Lower leg skin (tissue), 4 donors: ENCODE measurements at regions of chr17 and their contacts with region 1.

Region 1: DNA sequence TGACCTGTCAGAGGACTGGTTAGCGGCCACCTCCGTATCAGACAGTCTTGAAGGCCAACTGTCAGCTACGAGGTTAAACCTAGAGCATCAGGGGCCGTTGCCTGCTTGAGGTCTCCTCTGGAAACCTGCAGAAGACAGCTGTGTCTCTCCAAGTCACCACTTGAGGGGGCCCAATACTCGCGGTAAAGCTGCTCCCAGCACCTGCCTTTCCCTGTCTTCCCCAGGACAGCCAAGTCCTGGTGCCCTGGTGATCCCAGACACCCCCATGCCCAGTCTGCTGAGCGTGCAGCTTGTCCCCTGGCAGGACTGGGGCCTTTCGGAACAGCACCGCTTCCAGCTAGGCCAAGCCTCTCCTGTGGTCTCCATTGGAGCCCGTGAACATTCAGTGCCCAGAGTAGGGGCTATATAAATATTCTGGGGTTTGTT is 80.1 kb downstream of the DNAH17 start:
- DNase-seq: peak; percentile 59 to 91
- H3K4me3 ChIP-seq: no peak overlapping the region
- CTCF ChIP-seq: peak in 1 of 3 donors; percentile 42
- POLR2A ChIP-seq: no peak

Region 2: DNA sequence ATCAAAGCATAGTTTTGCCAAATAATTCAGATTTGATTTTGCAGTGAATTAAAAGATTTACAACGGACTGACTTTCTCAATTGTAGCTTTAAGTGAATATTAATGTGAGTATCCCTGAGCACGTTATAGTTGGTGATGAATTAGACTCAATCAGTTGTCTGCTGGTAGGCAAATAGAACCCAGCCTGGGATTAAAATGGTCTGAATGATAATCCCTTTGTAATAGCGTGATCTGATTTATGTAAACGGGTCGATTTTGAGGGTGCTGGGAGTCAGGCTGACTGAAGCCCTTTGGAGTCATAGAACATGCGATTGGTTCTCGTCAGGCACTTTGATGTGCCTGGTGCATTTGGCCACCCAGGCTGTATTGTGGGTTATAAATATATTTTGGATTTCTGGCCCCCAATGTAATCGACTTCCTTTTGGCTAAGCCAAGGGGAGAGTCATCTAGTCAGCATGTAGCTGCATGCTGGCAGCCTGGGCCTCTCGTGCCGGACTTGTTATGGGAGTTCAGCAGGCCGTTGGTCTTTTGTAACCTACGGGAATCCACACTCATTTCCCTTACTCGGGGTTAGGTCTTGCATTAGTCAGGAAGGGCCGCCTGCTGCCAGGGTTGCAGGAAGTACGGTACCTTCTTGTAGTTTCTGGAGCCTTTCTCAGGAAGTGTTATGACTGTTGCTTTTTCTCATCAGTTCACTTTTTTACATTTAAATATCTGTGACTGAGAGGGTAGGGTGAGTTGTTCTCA is 113.2 kb before region 1 on chr17:
- intact Hi-C with region 1: no loop called
- DNase-seq: peak; percentile 67 to 93
- H3K4me3 ChIP-seq: no peak overlapping the region
- CTCF ChIP-seq: no peak
- POLR2A ChIP-seq: no peak

Region 3: DNA sequence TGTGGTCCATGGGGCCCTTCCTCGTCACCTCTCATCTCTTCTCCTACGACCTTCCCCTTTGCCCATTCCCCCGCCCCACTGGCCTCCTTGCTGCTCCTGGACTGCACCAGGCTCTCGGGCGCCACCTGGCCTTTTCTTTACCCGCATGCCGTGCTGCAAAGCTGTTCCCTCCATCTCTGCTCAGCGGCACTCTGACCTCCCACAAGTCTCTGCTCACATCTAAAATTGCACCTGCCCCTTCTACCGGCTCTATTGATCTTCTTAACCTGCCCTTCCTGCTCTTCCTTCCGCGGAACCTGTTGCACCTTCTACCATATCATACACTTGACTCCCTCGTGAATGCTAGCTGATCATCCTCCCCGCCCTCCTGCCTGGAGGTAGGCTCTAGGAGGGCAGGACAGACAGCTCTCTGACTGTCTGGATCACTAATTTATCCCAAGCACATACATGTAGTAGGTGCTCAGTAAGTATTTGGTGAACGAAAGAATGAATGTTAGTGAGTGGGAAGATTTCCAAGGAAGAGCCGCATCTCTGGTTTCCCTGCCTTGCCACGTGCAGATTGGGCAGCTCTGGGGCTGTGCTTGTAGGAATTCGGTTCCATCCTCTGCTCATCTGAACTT is 62.7 kb after region 1 on chr17:
- intact Hi-C with region 1: no loop called
- DNase-seq: no peak
- H3K4me3 ChIP-seq: no peak overlapping the region
- CTCF ChIP-seq: no peak
- POLR2A ChIP-seq: no peak

Region 4: GRCh38 chr17:78708510-78708973 is 211.4 kb after region 1 on chr17:
- intact Hi-C with region 1: loop called (anchors 10 kb)
- DNase-seq: peak; percentile 50 to 92
- H3K4me3 ChIP-seq: no peak overlapping the region
- CTCF ChIP-seq: peak in 1 of 3 donors; percentile 86
- POLR2A ChIP-seq: no peak